Activated CD4-positive, alpha-beta memory T cell treated with anti-CD3 and anti-CD28 coated beads, Interleukin-2, amount 10 ng/mL, durations not matched to agents 7 days and 5 days (primary cell): ENCODE measurements at regions of chr17 and their contacts with region 1.

Region 1: DNA sequence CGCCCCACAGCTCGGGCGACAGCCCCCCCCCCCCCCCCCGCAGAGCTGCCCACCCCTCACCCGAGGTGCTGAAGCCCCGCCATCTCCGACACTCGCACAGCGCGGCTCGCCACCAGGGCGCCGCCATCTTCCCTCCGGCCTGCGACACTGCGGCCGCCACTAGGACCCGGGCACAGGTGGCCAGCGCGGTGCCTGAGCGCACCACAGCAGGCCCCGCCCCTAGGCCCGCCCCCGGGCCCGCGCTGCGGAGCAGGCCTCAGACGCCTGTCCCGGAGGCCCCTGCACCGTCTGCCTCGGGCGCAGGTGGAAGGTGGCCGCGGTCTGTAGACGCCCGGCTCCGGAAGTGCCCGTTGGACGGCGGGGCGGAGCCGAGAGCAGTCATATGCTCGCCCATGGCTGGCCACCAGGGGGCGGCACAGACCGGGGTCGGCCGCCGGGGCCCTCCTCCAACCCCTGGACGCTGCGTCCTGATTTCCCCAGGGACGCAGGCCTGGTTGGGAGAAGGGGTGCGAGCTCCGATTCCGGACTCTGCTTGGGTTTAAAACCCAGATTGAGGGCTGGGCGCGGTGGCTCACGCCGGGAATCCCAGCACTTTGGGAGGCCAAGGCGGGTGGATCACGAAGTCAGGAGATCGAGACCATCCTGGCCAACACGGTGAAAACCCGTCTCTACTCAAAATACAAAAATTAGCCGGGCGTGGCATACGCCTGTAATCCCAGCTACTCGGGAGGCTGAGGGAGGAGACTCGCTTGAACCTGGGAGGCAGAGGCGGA is at the start of gene MRPL38:
- DNase-seq: peak; percentile 98
- H3K4me3 Mint-ChIP-seq: peak within 1 kb of the TSS; percentile 87
- H3K27ac Mint-ChIP-seq: peak within 1 kb of the TSS; percentile 76
- H3K4me1 Mint-ChIP-seq: peaks cover 31% of the 10 kb centered on the region
- H3K27me3 Mint-ChIP-seq: no peaks in the 10 kb centered on the region
- total RNA-seq, gene MRPL38: 79.9 to 85.0 TPM

Region 2: GRCh38 chr17:75822119-75822799 is 82.7 kb before region 1 on chr17:
- CTCF ChIA-PET with region 1: no interaction called
- POLR2A ChIA-PET with region 1: no interaction called
- DNase-seq: no peak
- H3K4me3 Mint-ChIP-seq: no peak overlapping the region
- H3K27ac Mint-ChIP-seq: peak overlapping the region; percentile 68
- H3K4me1 Mint-ChIP-seq: peaks cover 28% of the 10 kb centered on the region
- H3K27me3 Mint-ChIP-seq: no peaks in the 10 kb centered on the region

Region 3: DNA sequence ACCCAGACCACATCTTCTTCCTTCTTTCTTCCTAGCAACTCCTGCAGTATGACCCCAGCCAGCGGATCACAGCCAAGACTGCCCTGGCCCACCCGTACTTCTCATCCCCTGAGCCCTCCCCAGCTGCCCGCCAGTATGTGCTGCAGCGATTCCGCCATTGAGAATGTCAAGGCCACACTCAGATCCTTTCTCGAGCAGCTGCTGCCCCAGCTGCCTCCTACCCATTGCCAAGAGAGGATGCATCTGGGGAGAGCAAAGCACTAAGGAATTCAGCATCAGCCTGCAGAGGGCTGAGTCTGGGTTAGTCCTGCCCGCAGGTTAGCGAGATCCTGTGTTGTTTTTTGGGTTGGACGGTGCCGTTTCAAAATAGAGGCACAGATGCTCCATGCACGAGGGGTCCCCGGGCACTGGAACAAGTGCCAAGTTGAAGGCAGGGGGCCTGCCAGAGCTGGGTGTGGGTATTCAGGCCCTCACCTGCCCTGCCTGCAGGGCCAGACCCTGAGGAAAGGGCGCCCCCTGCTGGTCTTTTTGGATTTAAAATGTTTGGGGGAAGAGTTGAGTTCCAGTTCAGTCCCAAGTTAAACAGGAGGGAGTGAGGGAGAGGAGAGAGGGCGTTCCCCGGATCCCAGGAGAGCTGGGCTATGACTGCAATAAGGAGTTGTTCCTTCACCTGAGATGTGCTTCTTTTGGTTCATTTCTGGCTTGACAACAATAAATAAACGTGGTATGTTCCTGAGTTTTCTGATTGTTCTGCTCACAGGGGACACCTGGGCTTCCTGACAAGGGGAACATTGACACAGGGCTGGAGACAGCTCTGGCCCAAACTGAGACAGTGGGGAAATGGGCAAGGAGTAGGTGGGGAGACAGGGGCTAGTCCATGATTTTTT is 100.6 kb after region 1 on chr17:
- CTCF ChIA-PET with region 1: interaction called, 67 read pairs
- POLR2A ChIA-PET with region 1: interaction called, 13 read pairs
- DNase-seq: peak; percentile 83
- H3K4me3 Mint-ChIP-seq: no peak overlapping the region
- H3K27ac Mint-ChIP-seq: no peak overlapping the region
- H3K4me1 Mint-ChIP-seq: peaks cover 6% of the 10 kb centered on the region
- H3K27me3 Mint-ChIP-seq: no peaks in the 10 kb centered on the region